Activated CD4-positive, alpha-beta T cell treated with anti-CD3 and anti-CD28 coated beads, Interleukin-2, amount 10 ng/mL, durations not matched to agents 24 days and 14 days (primary cell): ENCODE measurements at regions of chr2 and their contacts with region 1.

Region 1: GRCh38 chr2:161223139-161223732 is 63.0 kb downstream of the TANK start:
- DNase-seq: peak; percentile 71
- H3K4me3 Mint-ChIP-seq: no peak overlapping the region
- H3K27ac Mint-ChIP-seq: no peak overlapping the region
- H3K4me1 Mint-ChIP-seq: peaks cover 7% of the 10 kb centered on the region
- H3K27me3 Mint-ChIP-seq: no peaks in the 10 kb centered on the region

Region 2: DNA sequence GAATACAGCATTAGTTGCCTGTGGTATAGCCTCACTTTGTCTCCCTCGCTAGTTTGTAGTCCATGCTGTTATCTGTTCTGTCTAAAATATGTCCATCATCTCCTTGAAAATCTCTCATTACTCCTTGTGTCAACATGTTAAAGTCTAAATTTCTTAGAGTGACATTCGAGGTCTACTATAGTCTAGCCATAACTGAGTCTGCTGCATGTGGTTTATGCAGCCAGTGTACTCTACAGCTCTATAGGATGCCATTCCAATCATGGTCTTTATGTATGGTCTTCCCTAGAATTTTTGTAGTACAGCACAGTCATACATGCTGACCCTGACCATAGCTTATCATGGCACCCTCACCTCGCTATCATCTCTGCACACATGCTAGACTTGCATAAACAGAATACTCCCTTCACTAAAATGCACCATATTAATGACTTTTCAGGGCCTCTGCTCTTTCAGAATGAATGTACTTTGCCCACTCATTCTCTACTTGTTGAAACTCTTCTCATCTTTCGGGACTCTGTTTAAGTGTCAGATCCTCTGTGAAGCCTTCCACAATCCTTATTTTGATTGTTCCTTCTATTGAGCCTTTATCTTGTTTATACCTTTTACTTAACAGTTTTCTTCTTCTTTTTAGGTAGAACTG is 50.2 kb before region 1 on chr2:
- intact Hi-C with region 1: loop called (anchors 5 kb)
- DNase-seq: no peak
- H3K4me3 Mint-ChIP-seq: peak overlapping the region; percentile 34
- H3K27ac Mint-ChIP-seq: peak overlapping the region; percentile 71
- H3K4me1 Mint-ChIP-seq: peaks cover 55% of the 10 kb centered on the region
- H3K27me3 Mint-ChIP-seq: no peaks in the 10 kb centered on the region

Region 3: DNA sequence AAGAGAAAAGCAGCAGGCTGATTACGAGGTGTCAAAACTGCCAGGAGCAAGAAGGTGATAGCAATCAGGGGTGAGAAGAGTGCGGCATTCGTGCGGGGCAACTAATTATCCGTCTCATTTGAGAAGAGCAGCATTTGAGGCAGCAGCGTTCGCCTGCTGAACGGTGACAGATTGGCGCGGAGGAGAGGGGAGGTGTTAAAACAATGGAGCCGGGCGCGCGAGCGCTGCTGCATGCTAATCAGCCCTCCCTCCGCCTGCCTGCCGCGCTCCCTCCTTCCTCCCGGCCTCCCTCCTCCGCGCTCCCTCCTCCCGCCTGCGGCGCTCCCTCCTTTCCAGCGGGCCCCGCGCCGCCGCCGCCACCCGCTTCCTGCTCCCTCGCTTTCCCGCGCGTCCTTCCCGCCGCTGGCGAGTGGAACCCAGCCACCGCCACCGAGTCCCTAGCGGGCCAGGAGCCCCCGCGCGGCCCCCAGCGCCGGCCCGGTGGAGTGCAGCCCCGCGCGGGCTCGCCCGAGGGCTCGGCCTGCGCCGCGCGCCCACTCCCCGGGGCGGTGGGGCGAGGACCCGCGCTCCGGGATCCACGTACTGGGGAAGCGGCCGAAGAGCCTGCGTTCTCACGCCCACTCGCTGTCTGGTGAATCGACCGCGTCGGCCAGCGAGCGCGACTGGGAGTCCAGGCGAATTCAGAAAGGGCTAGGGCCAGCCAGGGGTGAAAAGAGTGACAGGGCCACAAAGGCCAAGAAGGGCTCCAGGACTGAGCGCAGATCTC is 15.5 kb after region 1 on chr2:
- intact Hi-C with region 1: loop called (anchors 2 kb)
- DNase-seq: peak; percentile 87
- H3K4me3 Mint-ChIP-seq: peak overlapping the region; percentile 92
- H3K27ac Mint-ChIP-seq: peak overlapping the region; percentile 82
- H3K4me1 Mint-ChIP-seq: peaks cover 41% of the 10 kb centered on the region
- H3K27me3 Mint-ChIP-seq: peaks cover 2% of the 10 kb centered on the region

Region 4: GRCh38 chr2:161273038-161273760 is 50.0 kb after region 1 on chr2:
- intact Hi-C with region 1: loop called (anchors 1 kb)
- DNase-seq: peak; percentile 83
- H3K4me3 Mint-ChIP-seq: no peak overlapping the region
- H3K27ac Mint-ChIP-seq: no peak overlapping the region
- H3K4me1 Mint-ChIP-seq: peaks cover 2% of the 10 kb centered on the region
- H3K27me3 Mint-ChIP-seq: peaks cover 17% of the 10 kb centered on the region